Aorta (tissue), 5 donors: ENCODE measurements at regions of chr4 and their contacts with region 1.

Region 1: GRCh38 chr4:153153339-153153871 is 50.8 kb upstream of the TRIM2 start:
- DNase-seq: peak; percentile 78 to 87
- ATAC-seq: peak; percentile 86
- H3K4me3 ChIP-seq: peak overlapping the region; percentile 41 to 68
- H3K27ac ChIP-seq: no peak overlapping the region
- H3K4me1 ChIP-seq: no peaks in the 10 kb centered on the region
- H3K27me3 ChIP-seq: no peaks in the 10 kb centered on the region

Region 2: GRCh38 chr4:153221783-153222706 is 68.6 kb after region 1 on chr4:
- intact Hi-C with region 1: loop called in 1 of 2 experiments (anchors 5 kb)
- DNase-seq: peak; percentile 72 to 85
- ATAC-seq: peak; percentile 80
- H3K4me3 ChIP-seq: peak overlapping the region; percentile 64 to 73
- H3K27ac ChIP-seq: peak overlapping the region in 1 of 2 donors; percentile 52
- H3K4me1 ChIP-seq: no peaks in the 10 kb centered on the region
- H3K27me3 ChIP-seq: no peaks in the 10 kb centered on the region